Cardiac septum (tissue), 1 donor: ENCODE measurements at regions of chr14 and their contacts with region 1.

Region 1: GRCh38 chr14:105093431-105094192 is 28.4 kb upstream of the GPR132 start:
- DNase-seq: peak; percentile 87

Region 2: GRCh38 chr14:105153271-105153731 is 59.7 kb after region 1 on chr14:
- intact Hi-C with region 1: no loop called
- DNase-seq: peak; percentile 85

Region 3: DNA sequence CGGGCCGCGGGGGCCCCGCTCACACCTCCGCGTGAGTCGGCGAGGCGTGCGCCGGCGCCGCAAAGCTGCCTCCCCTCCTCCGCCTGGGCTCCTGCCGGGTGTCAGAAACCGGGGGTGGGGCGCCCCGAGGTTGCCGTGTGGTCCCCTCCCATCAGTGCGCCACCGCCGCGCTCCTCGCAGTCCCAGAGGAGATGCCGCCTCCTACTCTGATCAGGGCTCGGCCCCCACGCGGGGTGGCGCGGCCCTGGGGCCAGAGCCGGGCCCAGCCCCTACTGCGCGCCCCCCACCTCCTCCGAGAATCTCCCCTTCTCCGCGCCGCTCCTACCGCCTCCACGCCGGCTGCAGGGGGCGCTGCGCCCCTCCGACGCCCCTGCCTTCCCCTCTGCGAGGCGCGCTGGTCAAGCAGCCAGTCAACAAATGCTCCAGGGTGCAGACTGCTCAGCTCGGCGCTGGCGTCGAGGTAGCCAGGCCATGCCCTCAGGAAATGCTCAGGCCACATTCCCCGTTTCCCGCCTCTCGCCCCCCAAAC is 75.4 kb after region 1 on chr14:
- intact Hi-C with region 1: loop called (anchors 5 kb)
- DNase-seq: no peak

Region 4: GRCh38 chr14:105180592-105181548 is 87.3 kb after region 1 on chr14 and contains the start of gene NUDT14:
- intact Hi-C with region 1: loop called (anchors 5 kb)
- DNase-seq: no peak
- total RNA-seq, gene NUDT14: 27.1 TPM

Region 5: GRCh38 chr14:105203057-105203531 is 109.5 kb after region 1 on chr14:
- intact Hi-C with region 1: loop called (anchors 2 kb)
- DNase-seq: no peak

Region 6: GRCh38 chr14:105281371-105282097 is 187.9 kb after region 1 on chr14:
- intact Hi-C with region 1: loop called (anchors 5 kb)
- DNase-seq: no peak

Region 7: GRCh38 chr14:105351920-105352851 is 258.6 kb after region 1 on chr14:
- intact Hi-C with region 1: loop called (anchors 5 kb)
- DNase-seq: peak; percentile 92

Region 8: DNA sequence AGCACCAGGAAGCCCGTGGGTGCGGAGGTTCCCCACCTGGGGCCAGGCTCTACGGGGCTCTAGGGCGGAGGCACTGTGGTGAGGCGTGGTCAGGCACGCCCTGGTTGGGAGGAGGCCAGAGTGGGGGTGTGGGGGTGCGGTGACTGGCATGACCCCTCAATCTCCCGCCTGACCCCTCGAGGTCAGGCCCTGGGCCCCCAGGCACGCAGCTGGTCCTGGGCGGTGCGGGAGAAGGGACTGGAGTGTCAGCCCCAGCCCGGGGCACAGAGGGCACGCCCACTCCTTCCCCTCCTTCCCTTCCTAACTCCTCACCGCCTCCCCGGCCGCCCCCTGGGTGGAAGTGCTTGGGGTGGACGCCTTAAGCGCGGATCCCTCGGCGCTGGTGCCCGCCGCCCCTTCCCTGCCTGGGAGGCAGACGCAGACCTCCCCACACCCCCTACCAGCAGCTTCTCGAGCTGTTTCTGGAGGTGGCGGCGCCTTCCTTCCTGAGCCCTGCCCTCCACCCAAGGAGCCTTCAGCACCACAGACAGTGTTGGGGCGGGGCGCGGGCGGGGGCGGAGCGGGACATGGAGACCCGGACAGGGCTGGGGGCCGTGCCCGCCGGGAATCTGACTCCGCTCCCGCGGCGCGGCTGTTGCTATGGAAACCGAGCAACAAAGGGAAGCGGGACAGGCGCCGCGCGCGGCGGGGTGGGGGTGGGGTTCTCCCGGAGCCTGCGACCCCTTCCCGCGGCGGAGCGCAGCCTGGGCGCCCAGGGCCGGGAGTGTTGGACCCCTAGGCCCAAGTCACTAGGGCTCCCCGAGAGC is 380.3 kb after region 1 on chr14:
- intact Hi-C with region 1: loop called (anchors 5 kb)
- DNase-seq: peak; percentile 96